Calu3 (cell line): ENCODE measurements at regions of chr14 and their contacts with region 1.

Region 1: GRCh38 chr14:68520637-68521556 is 272.0 kb downstream of the ZFP36L1 start:
- DNase-seq: peak; percentile 85
- H3K4me3 Mint-ChIP-seq: peak overlapping the region; percentile 34
- H3K27ac Mint-ChIP-seq: peak overlapping the region; percentile 86
- H3K4me1 Mint-ChIP-seq: peaks cover 47% of the 10 kb centered on the region
- H3K27me3 Mint-ChIP-seq: no peaks in the 10 kb centered on the region
- CTCF ChIP-seq: no peak

Region 2: DNA sequence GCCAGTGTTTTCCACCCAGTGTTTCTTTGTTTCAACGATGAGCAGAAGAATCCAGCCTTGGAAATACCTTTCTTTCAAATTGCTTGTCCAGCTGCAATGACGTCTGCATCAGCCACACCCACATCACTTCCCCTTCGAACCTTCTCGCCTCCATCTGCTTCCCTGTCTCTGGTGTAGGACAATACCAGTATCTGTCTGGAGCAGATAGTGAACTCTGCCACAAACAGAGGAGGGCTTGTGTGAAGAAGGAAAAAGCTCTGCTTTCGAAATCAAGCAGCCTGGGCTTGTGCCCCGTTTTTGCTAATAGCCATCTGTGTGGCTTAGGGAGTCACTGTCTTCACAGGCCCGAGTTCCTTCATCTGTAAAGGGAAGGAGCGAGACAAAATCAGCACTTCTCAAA is 143.4 kb before region 1 on chr14:
- CTCF ChIA-PET with region 1: no interaction called
- intact Hi-C with region 1: loop called (anchors 10 kb)
- DNase-seq: peak; percentile 44
- H3K4me3 Mint-ChIP-seq: no peak overlapping the region
- H3K27ac Mint-ChIP-seq: peak overlapping the region; percentile 68
- H3K4me1 Mint-ChIP-seq: peaks cover 26% of the 10 kb centered on the region
- H3K27me3 Mint-ChIP-seq: no peaks in the 10 kb centered on the region
- CTCF ChIP-seq: no peak

Region 3: GRCh38 chr14:68392393-68393141 is 128.3 kb before region 1 on chr14:
- CTCF ChIA-PET with region 1: no interaction called
- intact Hi-C with region 1: no loop called
- DNase-seq: no peak
- H3K4me3 Mint-ChIP-seq: no peak overlapping the region
- H3K27ac Mint-ChIP-seq: no peak overlapping the region
- H3K4me1 Mint-ChIP-seq: no peaks in the 10 kb centered on the region
- H3K27me3 Mint-ChIP-seq: no peaks in the 10 kb centered on the region
- CTCF ChIP-seq: no peak

Region 4: GRCh38 chr14:68466491-68467032 is 54.3 kb before region 1 on chr14:
- CTCF ChIA-PET with region 1: interaction called, 3 read pairs
- intact Hi-C with region 1: loop called (anchors 5 kb)
- DNase-seq: peak; percentile 33
- H3K4me3 Mint-ChIP-seq: no peak overlapping the region
- H3K27ac Mint-ChIP-seq: no peak overlapping the region
- H3K4me1 Mint-ChIP-seq: peaks cover 48% of the 10 kb centered on the region
- H3K27me3 Mint-ChIP-seq: no peaks in the 10 kb centered on the region
- CTCF ChIP-seq: no peak

Region 5: GRCh38 chr14:68553311-68553710 is 32.4 kb after region 1 on chr14:
- CTCF ChIA-PET with region 1: no interaction called
- intact Hi-C with region 1: no loop called
- DNase-seq: no peak
- H3K4me3 Mint-ChIP-seq: no peak overlapping the region
- H3K27ac Mint-ChIP-seq: no peak overlapping the region
- H3K4me1 Mint-ChIP-seq: peaks cover 25% of the 10 kb centered on the region
- H3K27me3 Mint-ChIP-seq: no peaks in the 10 kb centered on the region
- CTCF ChIP-seq: no peak

Region 6: GRCh38 chr14:68577827-68578541 is 57.1 kb after region 1 on chr14:
- CTCF ChIA-PET with region 1: no interaction called
- intact Hi-C with region 1: loop called (anchors 5 kb)
- DNase-seq: peak; percentile 75
- H3K4me3 Mint-ChIP-seq: no peak overlapping the region
- H3K27ac Mint-ChIP-seq: peak overlapping the region; percentile 98
- H3K4me1 Mint-ChIP-seq: peaks cover 45% of the 10 kb centered on the region
- H3K27me3 Mint-ChIP-seq: no peaks in the 10 kb centered on the region
- CTCF ChIP-seq: no peak

Region 7: DNA sequence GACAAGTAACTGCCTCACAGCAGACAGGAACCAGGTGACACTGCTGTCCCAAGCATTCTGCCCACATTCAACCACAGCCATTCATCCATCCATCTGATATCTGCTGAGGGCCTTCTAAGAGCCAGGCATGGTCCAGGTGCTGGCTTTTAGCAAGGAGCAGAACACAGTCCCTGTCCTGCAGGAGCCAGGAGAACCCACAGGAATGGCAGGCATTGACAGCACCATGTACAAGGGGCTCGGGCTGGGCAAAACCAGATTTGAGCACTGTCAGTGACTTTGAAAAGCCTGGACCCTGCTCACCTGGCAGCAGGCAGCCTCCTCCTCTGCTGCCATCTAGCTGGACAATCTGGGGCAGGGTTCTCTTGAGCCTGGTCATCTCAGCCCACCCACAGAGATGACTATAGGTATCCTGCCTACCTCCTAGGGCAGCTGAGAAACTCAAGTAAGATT is 135.0 kb after region 1 on chr14:
- CTCF ChIA-PET with region 1: no interaction called
- intact Hi-C with region 1: loop called (anchors 10 kb)
- DNase-seq: peak; percentile 45
- H3K4me3 Mint-ChIP-seq: no peak overlapping the region
- H3K27ac Mint-ChIP-seq: no peak overlapping the region
- H3K4me1 Mint-ChIP-seq: peaks cover 9% of the 10 kb centered on the region
- H3K27me3 Mint-ChIP-seq: no peaks in the 10 kb centered on the region
- CTCF ChIP-seq: no peak